Panc1 (cell line): ENCODE measurements at regions of chr19 and their contacts with region 1.

Region 1: GRCh38 chr19:13547102-13547501 is 40.8 kb upstream of the CACNA1A start:
- DNase-seq: no peak
- ATAC-seq: no peak
- H3K4me3 ChIP-seq: no peak overlapping the region
- H3K27ac ChIP-seq: no peak overlapping the region
- H3K4me1 ChIP-seq: no peaks in the 10 kb centered on the region
- H3K27me3 ChIP-seq: no peaks in the 10 kb centered on the region; the same call in 1 of the 2 replicates
- CTCF ChIP-seq: no peak

Region 2: DNA sequence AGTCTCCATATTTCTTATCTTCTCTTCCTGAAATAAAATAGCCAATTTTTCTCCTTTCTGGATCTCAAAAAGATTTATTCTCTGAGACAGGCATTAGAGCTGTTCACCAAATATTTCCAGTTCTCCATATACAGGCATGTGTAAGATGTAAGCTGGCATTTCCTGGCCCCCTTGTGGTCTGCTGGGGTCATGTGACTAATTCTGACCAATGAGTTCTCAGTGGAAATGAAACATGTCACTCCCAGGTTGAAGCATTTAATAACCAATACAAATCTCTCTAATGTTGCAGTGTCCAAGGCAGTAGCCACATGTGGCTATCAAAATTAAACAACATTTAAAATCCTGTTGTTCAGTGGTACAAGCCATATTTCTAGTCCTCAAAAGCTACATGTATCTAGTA is 26.0 kb before region 1 on chr19:
- CTCF ChIA-PET with region 1: interaction called, 3 read pairs
- POLR2A ChIA-PET with region 1: interaction called, 11 read pairs
- in situ Hi-C with region 1: no loop called
- intact Hi-C with region 1: no loop called
- DNase-seq: no peak
- ATAC-seq: no peak
- H3K4me3 ChIP-seq: no peak overlapping the region
- H3K27ac ChIP-seq: no peak overlapping the region
- H3K4me1 ChIP-seq: no peaks in the 10 kb centered on the region
- H3K27me3 ChIP-seq: peaks cover 2% of the 10 kb centered on the region
- CTCF ChIP-seq: peak; percentile 5; the same call in 1 of the 2 replicates

Region 3: GRCh38 chr19:13652810-13653590 is 105.9 kb after region 1 on chr19:
- CTCF ChIA-PET with region 1: no interaction called
- POLR2A ChIA-PET with region 1: no interaction called
- in situ Hi-C with region 1: no loop called
- intact Hi-C with region 1: no loop called
- DNase-seq: no peak
- ATAC-seq: no peak
- H3K4me3 ChIP-seq: no peak overlapping the region
- H3K27ac ChIP-seq: no peak overlapping the region
- H3K4me1 ChIP-seq: no peaks in the 10 kb centered on the region
- H3K27me3 ChIP-seq: no peaks in the 10 kb centered on the region
- CTCF ChIP-seq: no peak

Region 4: DNA sequence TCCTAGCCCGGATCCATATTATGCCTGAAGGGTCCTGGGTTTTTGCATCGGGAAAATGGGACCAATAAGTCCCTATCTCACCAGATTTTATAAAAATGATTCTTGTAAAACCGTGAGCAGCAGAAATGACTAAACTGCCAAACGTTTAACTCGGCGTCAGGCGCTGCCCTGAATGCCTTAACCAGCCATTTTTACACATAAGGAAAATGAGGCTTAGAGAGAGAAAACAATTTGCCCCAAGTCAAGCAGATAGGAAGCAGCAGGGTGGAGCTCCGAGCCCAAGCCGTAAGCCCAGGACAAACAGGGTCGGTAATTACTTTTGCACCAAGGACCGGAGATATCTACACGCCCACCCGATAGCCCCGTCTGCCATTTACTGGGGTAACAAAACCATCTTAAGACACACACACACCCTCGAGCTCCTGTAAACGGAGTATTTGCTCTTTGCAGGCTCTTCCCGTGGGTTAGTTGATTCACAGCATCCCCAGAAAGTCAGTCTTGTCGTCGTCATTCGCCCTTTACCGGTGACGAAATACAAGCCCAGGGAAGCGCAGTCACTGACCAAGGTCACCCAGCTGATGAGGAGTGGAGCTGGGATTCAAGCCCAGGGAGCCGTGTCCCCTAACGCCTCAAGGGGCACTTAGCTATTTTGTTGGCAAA is 201.2 kb after region 1 on chr19:
- CTCF ChIA-PET with region 1: no interaction called
- POLR2A ChIA-PET with region 1: interaction called, 13 read pairs
- in situ Hi-C with region 1: no loop called
- intact Hi-C with region 1: no loop called
- DNase-seq: no peak
- ATAC-seq: peak; percentile 7; the same call in 1 of the 2 replicates
- H3K4me3 ChIP-seq: peak overlapping the region; percentile 90
- H3K27ac ChIP-seq: peak overlapping the region; percentile 97
- H3K4me1 ChIP-seq: no peaks in the 10 kb centered on the region; the same call in 1 of the 2 replicates
- H3K27me3 ChIP-seq: no peaks in the 10 kb centered on the region
- CTCF ChIP-seq: no peak